ENCODE measurements at regions of chr5 and their contacts with region 1.

Region 1: GRCh38 chr5:38023799-38024198 is 184.0 kb upstream of the GDNF start:
- DNase-seq: peak in 1 of 4 experiments; percentile 12
- ATAC-seq: no peak
- H3K4me3 ChIP-seq: no peak overlapping the region
- H3K27ac ChIP-seq: no peak overlapping the region
- H3K4me1 ChIP-seq: no peaks in the 10 kb centered on the region
- H3K27me3 ChIP-seq: peaks cover 3 to 9% of the 10 kb centered on the region in 2 experiments; a peak in 3 of 5 replicates
- CTCF ChIP-seq: peak in 2 of 3 experiments; percentile 12 to 21; a peak in 2 of 6 replicates
- EP300 ChIP-seq: no peak
- POLR2A ChIP-seq: no peak
- RAD21 ChIP-seq: no peak

Region 2: GRCh38 chr5:37940931-37941623 is 82.7 kb before region 1 on chr5:
- CTCF ChIA-PET with region 1: no interaction called
- POLR2A ChIA-PET with region 1: no interaction called
- in situ Hi-C with region 1: no loop called
- intact Hi-C with region 1: no loop called
- DNase-seq: no peak
- ATAC-seq: no peak
- H3K4me3 ChIP-seq: no peak overlapping the region
- H3K27ac ChIP-seq: no peak overlapping the region
- H3K4me1 ChIP-seq: no peaks in the 10 kb centered on the region
- H3K27me3 ChIP-seq: no peaks in the 10 kb centered on the region
- CTCF ChIP-seq: no peak
- EP300 ChIP-seq: no peak
- POLR2A ChIP-seq: no peak
- RAD21 ChIP-seq: no peak

Region 3: GRCh38 chr5:38187532-38187931 is 163.7 kb after region 1 on chr5:
- CTCF ChIA-PET with region 1: no interaction called
- POLR2A ChIA-PET with region 1: no interaction called
- in situ Hi-C with region 1: no loop called
- intact Hi-C with region 1: loop called (anchors 2 kb)
- DNase-seq: no peak
- ATAC-seq: no peak
- H3K4me3 ChIP-seq: no peak overlapping the region
- H3K27ac ChIP-seq: no peak overlapping the region
- H3K4me1 ChIP-seq: 0 out of 5 replicates have a peak, but pooled peaks cover 0 to 2% of the 10 kb centered on the region in 2 experiments
- H3K27me3 ChIP-seq: peaks cover 17 to 38% of the 10 kb centered on the region in 2 experiments
- CTCF ChIP-seq: no peak
- EP300 ChIP-seq: no peak
- POLR2A ChIP-seq: no peak
- RAD21 ChIP-seq: no peak

Measured in K562 (cell line).